ENCODE measurements at regions of chr7 and their contacts with region 1.

Region 1: GRCh38 chr7:75662579-75663301 is 76.0 kb downstream of the HIP1 start:
- DNase-seq: no peak
- H3K4me3 ChIP-seq: no peak overlapping the region
- H3K27ac ChIP-seq: no peak overlapping the region
- H3K4me1 ChIP-seq: peaks cover under 1% of the 10 kb centered on the region
- H3K27me3 ChIP-seq: no peaks in the 10 kb centered on the region
- CTCF ChIP-seq: no peak
- POLR2A ChIP-seq: no peak

Region 2: GRCh38 chr7:75687246-75688088 is 24.7 kb after region 1 on chr7:
- CTCF ChIA-PET with region 1: no interaction called
- POLR2A ChIA-PET with region 1: no interaction called
- dilution Hi-C with region 1: no loop called
- intact Hi-C with region 1: loop called (anchors 1 kb)
- DNase-seq: no peak
- H3K4me3 ChIP-seq: no peak overlapping the region
- H3K27ac ChIP-seq: no peak overlapping the region
- H3K4me1 ChIP-seq: no peaks in the 10 kb centered on the region
- H3K27me3 ChIP-seq: no peaks in the 10 kb centered on the region
- CTCF ChIP-seq: no peak
- POLR2A ChIP-seq: no peak